Posterior cingulate gyrus (tissue), 11 donors: ENCODE measurements at regions of chr9 and their contacts with region 1.

Region 1: DNA sequence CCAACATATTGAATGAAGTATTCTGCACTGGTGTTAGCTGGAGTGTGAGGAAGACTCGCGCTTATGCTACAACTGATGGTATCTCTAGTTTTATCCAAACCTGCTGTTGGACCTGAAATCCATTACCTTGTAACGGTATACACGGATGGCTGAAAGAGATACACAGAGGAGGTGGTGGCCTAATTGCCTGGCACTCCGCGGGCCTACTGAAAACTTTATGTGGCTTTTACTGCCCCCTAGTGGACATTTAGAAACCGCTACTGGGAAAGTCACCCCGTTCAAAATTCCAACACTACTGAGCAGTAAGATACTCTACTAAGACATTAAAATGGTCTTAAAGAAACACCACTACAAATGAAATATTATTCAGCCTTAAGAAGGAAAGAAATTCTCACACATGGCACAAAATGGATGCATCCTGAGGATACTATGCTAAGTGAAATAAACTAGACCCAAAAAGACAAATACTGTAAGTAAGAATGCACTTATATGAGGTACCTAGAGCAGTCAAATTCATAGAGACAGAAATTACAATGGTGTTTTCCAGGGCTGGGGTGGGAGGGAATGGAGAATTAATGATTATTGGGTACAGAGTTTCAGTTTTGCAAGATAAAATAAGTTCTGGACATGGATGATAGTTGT is 100.4 kb downstream of the TTLL11 start:
- DNase-seq: peak; percentile 29 to 90 (median 57)

Region 2: DNA sequence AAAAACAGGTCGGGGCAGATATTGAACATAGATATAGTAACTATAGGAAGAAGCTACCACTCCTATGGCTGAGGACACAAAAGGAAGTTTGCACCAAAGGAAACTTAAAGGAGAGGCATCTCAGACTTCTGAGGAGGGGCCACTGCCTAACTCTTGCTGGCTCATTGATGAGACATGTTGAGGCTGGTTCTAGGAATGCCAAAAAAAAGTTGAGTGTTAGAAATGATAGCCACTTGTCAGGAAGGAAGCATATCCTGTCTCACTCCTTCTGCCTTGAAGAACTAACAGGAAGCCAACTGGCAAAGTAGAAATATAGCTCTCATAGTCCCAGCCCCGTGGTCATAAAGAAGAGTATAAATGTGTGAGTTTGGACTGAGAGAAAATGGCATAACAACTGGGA is 599.4 kb before region 1 on chr9:
- intact Hi-C with region 1: no loop called
- DNase-seq: no peak

Region 3: GRCh38 chr9:121545875-121546423 is 446.7 kb before region 1 on chr9:
- intact Hi-C with region 1: loop called (anchors 2 kb)
- DNase-seq: peak; percentile 79 to 99 (median 94)

Region 4: DNA sequence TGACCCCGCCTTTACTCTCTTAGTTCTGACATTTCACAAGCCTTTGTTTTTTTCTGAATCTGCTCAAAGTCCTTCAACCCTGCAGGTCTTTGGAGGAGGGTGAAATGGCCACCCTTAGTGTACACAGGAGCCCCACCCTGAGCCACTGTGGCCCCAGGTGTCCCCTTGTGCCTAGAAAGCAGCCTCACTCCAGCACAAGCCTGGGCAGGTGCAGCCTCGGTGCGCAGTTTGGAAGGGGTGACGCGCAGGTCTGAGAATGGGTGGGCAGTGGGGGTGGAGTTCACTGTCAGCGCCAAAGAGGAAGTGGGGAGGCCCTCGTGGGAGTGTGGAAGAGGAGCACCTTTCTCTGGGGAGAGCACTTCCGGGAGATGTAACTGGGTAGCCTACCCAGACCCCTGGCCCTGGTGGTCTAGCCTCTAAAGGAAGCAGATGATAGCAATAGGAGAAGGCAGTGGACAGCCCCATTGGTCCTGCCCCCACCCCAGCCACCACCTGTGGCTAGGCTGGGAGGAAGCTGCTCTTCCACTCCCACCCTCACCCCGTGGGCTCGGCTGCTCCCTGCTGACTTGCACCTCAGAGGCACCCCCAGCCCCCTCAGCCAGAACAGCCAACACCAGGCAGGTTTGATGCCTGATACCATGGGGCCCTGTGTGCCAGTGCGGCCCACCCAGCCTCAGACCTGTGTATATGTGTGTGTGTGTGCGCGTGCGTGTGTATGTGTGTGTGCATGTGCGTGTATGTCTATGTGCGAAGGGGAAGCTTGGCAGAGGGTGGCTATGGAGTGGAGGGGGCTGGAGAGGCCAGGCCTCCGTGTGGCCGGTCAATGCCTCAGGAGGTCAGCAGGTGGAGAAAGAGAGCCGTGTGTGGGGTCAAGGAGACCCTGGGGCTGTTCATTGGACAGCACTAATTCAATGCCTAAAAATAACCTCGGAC is 358.1 kb before region 1 on chr9:
- intact Hi-C with region 1: loop called (anchors 5 kb)
- DNase-seq: peak in 2 of 10 donors; percentile 55 to 92

Region 5: GRCh38 chr9:121686930-121687541 is 305.7 kb before region 1 on chr9:
- intact Hi-C with region 1: loop called (anchors 1 kb)
- DNase-seq: peak; percentile 61 to 96 (median 83)

Region 6: DNA sequence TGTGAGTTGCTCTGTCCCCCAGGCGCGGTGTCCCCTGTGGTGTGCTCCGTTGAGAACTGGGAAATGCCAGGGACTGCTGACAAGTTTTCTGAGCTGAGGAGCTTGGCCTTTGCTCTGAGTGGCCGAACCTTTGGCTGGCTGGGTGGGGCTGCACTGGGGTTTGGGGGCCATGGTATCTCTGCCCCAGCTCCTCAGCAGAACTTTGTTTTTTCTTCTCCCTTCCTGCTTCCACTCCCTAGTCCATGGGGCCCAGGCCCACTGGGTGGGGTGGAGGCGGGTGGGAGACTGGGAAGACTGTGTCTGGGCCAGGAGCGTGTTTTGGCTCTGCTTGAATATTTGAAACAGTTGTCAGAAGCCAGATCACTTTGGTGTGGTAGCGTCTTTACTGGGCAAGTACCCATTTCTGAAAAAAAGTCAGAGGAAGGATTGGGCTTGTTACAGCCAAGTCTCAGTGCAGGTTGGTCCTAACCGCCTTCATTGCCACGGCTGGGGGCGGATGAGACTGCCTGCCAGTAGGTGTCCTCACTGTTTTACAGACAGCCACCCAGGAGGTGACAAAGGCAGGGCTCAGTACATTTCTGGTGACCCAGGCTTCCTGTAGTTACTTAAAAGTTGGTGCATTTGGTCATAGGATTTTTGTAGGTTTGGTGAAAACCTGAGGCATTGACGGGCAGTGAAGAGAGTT is 248.5 kb before region 1 on chr9:
- intact Hi-C with region 1: loop called (anchors 5 kb)
- DNase-seq: peak; percentile 46 to 93 (median 66)